Esophagus muscularis mucosa (tissue), 4 donors: ENCODE measurements at regions of chr1 and their contacts with region 1.

Region 1: GRCh38 chr1:162878000-162878596 is 17.1 kb upstream of the CCDC190 start:
- DNase-seq: no peak
- H3K4me3 ChIP-seq: no peak overlapping the region
- H3K27ac ChIP-seq: no peak overlapping the region
- H3K4me1 ChIP-seq: no peaks in the 10 kb centered on the region
- H3K27me3 ChIP-seq: no peaks in the 10 kb centered on the region
- CTCF ChIP-seq: peak; percentile 64 to 78 (median 70)
- EP300 ChIP-seq: no peak
- POLR2A ChIP-seq: no peak

Region 2: DNA sequence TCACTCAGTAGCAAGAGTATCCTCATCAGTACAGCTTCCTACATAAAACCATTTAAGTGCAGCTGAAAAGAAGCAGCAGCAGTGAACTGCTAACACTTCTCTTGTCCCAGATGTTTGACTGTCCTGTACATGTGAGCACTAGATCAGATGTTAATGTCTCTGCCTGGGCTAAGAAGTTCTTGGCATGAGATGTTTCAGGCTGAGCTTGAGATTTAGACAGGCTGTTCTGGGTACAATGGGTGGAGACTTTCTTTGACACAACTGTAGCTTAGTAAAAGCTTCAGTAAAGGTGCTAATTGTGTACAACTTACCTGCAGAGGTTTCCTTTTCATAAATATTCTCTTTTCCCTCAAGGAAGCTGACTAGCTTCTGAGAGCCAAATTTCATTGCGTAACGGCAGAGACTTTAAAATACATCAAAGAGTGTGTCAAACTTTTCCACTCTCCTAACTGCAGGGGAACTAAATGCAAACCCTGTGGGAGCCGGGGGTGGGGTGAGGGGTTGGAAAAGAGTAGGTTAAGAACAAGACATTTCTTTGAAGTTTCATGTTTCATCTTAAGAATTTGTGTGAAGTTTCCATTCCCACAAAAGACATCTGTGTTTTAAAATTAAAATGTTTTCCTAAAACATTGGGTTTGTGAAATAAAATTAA is 64.9 kb after region 1 on chr1:
- intact Hi-C with region 1: no loop called
- DNase-seq: no peak
- H3K4me3 ChIP-seq: no peak overlapping the region
- H3K27ac ChIP-seq: no peak overlapping the region
- H3K4me1 ChIP-seq: peaks cover 0 to 10% (median 4%) of the 10 kb centered on the region in 4 donors
- H3K27me3 ChIP-seq: no peaks in the 10 kb centered on the region
- CTCF ChIP-seq: no peak
- EP300 ChIP-seq: no peak
- POLR2A ChIP-seq: no peak

Region 3: DNA sequence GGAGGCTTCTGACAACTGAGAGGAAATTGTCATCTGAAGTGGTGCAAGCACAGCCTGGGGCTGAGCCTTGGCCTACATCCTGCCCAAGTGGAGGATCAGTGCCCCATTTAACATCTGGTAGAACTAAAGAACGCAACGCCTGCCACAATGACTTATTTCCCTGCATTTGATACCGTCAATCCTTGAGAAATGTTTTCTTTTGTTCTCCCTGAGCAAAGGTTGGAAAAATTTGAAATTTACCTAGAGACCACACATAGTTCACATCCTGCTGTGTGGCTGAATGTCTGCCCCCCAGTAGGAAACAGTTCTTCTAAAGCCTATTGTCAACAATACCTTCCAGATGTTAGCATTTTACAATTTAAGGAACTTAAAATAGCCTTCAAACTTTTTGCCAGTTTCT is 185.5 kb after region 1 on chr1:
- intact Hi-C with region 1: loop called (anchors 5 kb)
- DNase-seq: no peak
- H3K4me3 ChIP-seq: no peak overlapping the region
- H3K27ac ChIP-seq: no peak overlapping the region
- H3K4me1 ChIP-seq: peaks cover 0 to 4% (median 2%) of the 10 kb centered on the region in 4 donors
- H3K27me3 ChIP-seq: no peaks in the 10 kb centered on the region
- CTCF ChIP-seq: no peak
- EP300 ChIP-seq: no peak
- POLR2A ChIP-seq: no peak

Region 4: DNA sequence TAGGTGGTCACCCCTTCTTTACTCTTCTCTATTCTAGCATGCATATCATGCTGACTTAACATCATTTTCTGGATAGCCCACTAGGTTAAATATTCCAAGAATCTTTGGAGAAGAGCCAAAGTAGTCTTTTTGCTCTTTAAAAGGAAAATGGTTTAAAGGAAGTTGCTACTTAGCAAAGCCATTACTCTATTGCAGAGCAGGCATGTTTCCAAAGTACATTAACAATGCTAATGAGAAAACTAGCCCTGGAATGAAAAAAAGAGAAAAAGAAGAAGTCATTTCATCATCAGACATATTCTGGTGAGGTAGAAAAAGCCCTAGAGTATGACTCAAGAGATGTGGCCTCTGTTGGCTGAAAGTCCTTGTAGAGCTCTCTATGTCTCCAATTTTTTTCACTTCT is 517.7 kb after region 1 on chr1:
- intact Hi-C with region 1: no loop called
- DNase-seq: no peak
- H3K4me3 ChIP-seq: no peak overlapping the region
- H3K27ac ChIP-seq: no peak overlapping the region
- H3K4me1 ChIP-seq: peaks cover 0 to 19% (median 10%) of the 10 kb centered on the region in 4 donors
- H3K27me3 ChIP-seq: no peaks in the 10 kb centered on the region
- CTCF ChIP-seq: no peak
- EP300 ChIP-seq: no peak
- POLR2A ChIP-seq: no peak